ENCODE measurements at regions of chr2 and their contacts with region 1.

Region 1: GRCh38 chr2:104412384-104412783 is 441.5 kb upstream of the POU3F3 start:
- DNase-seq: peak in 1 of 2 donors; percentile 17
- ATAC-seq: no peak
- H3K4me3 ChIP-seq: no peak overlapping the region
- H3K4me3 Mint-ChIP-seq: no peak overlapping the region
- H3K27ac ChIP-seq: no peak overlapping the region
- H3K27ac Mint-ChIP-seq: no peak overlapping the region
- H3K4me1 ChIP-seq: no peaks in the 10 kb centered on the region
- H3K4me1 Mint-ChIP-seq: no peaks in the 10 kb centered on the region
- H3K27me3 ChIP-seq: no peaks in the 10 kb centered on the region
- H3K27me3 Mint-ChIP-seq: peaks cover 4 to 11% of the 10 kb centered on the region in 2 donors
- CTCF ChIP-seq: no peak

Region 2: GRCh38 chr2:102975996-102976975 is 1436.1 kb before region 1 on chr2:
- intact Hi-C with region 1: loop called (anchors 5 kb)
- DNase-seq: no peak
- ATAC-seq: no peak
- H3K4me3 ChIP-seq: no peak overlapping the region
- H3K4me3 Mint-ChIP-seq: no peak overlapping the region
- H3K27ac ChIP-seq: no peak overlapping the region
- H3K27ac Mint-ChIP-seq: no peak overlapping the region
- H3K4me1 ChIP-seq: no peaks in the 10 kb centered on the region
- H3K4me1 Mint-ChIP-seq: peaks cover 0 to 12% of the 10 kb centered on the region in 2 donors
- H3K27me3 ChIP-seq: no peaks in the 10 kb centered on the region
- H3K27me3 Mint-ChIP-seq: peaks cover 9% of the 10 kb centered on the region in 2 donors
- CTCF ChIP-seq: no peak

Region 3: GRCh38 chr2:104473546-104473945 is 61.2 kb after region 1 on chr2:
- intact Hi-C with region 1: no loop called
- DNase-seq: no peak
- ATAC-seq: no peak
- H3K4me3 ChIP-seq: no peak overlapping the region
- H3K4me3 Mint-ChIP-seq: no peak overlapping the region
- H3K27ac ChIP-seq: no peak overlapping the region
- H3K27ac Mint-ChIP-seq: no peak overlapping the region
- H3K4me1 ChIP-seq: no peaks in the 10 kb centered on the region
- H3K4me1 Mint-ChIP-seq: no peaks in the 10 kb centered on the region
- H3K27me3 ChIP-seq: no peaks in the 10 kb centered on the region
- H3K27me3 Mint-ChIP-seq: peaks cover 3 to 16% of the 10 kb centered on the region in 2 donors
- CTCF ChIP-seq: no peak

Measured in natural killer cell (primary cell).